ENCODE measurements at regions of chr6 and their contacts with region 1.

Region 1: DNA sequence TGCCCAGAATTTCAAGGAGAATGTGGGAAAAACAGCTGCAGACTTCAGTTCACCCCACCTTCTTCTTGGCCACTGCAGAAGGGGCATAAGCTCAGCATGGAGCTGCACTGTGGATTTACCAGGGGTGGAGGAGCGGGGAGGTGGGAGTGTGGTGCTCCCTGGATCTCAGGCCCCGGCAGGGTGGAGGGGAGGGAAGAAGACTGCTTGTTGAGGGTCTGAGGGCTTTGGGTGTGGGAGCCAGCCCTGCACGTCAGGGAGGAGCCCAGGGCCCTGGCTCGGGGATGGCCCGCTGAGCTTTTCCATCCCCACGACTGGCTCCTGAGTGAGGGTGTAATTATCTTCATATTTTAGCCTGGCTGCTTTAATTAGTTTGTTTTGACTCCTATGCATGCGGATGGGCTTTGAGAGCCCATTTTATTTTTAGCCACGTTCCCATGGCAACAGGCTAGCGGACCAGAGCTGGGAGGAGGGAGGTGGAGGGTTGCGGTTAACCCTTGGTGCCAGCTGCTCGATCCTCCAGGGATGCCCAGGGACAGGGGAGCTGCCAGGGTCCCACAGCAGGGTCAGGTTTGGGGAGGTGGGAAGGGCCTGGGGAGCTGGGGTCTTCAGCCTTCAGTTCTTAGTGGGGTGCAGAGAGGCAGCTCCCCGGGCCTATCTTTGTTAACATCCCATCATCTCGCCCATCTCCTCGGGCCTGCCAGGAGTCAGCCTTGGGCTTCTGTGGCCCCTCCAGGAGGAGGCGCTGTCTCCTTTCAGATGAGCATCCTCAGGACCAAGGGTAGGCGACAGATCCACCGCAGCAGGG is 68.2 kb downstream of the RAB44 start:
- DNase-seq: peak; percentile 91
- ATAC-seq: peak; percentile 93
- H3K4me3 Mint-ChIP-seq: no peak overlapping the region
- H3K27ac Mint-ChIP-seq: no peak overlapping the region
- H3K4me1 Mint-ChIP-seq: peaks cover 17% of the 10 kb centered on the region
- H3K27me3 Mint-ChIP-seq: no peaks in the 10 kb centered on the region
- CTCF ChIP-seq: peak; percentile 91

Region 2: DNA sequence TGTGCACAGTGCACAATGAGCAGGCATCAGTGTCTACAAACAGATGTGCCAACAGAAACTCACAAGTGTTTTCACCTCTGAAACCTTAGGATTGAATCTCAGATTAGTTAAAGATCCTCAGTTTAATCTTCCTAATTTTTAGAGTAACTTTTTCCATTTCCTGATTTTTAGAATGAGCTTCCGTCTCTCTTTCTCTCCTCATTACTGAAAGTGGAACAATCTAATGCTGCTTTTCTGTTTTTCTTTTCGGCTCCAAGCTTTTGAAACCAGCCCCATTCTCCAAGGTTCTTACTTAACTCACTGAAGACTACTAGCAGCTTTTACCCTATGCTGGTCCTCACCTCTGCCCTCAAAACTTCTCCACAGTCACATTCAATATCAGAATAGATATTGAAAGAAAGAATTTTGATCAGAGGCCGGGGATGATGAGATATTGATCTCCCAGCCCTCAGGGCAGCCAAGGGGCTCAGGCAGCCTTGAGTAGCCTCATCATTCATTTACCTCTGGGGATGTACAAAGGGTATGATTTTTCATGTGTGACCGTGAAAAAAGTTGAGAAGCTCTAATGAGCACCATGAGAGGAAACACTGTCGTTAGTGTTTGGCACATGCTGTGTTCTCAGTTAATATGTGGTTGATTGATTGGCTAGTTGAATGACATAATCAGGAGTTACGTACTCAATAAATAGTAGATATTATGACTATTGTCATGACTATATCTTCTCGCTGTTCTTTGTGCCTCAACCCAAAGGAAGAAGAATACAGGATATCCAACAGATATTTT is 206.6 kb before region 1 on chr6:
- CTCF ChIA-PET with region 1: no interaction called
- POLR2A ChIA-PET with region 1: no interaction called
- DNase-seq: no peak
- ATAC-seq: no peak
- H3K4me3 Mint-ChIP-seq: no peak overlapping the region
- H3K27ac Mint-ChIP-seq: no peak overlapping the region
- H3K4me1 Mint-ChIP-seq: no peaks in the 10 kb centered on the region
- H3K27me3 Mint-ChIP-seq: no peaks in the 10 kb centered on the region
- CTCF ChIP-seq: no peak

Region 3: DNA sequence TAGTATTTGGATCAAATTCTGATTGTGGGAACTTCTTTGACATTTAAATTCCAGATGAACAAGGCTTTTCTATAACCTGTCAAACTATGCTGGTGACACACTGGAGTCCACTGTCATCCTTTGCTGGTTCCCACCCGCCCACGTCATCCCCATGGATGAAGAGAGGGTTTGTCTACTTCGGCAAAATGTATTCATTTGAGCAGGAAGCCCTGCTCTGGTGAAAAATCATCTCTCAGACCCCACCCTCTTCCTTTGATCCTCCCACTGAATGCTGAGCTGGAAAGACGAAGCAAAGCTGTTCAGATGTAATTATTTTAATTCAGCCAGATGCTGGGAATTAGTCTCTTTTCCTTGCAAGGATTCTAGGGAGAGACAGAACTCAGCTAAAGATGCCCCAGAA is 23.0 kb after region 1 on chr6:
- CTCF ChIA-PET with region 1: interaction called, 454 read pairs
- POLR2A ChIA-PET with region 1: no interaction called
- DNase-seq: no peak
- ATAC-seq: no peak
- H3K4me3 Mint-ChIP-seq: no peak overlapping the region
- H3K27ac Mint-ChIP-seq: 0 out of 2 replicates have a peak overlapping the region, but pooled peaks have one; percentile 65
- H3K4me1 Mint-ChIP-seq: peaks cover 40% of the 10 kb centered on the region
- H3K27me3 Mint-ChIP-seq: no peaks in the 10 kb centered on the region
- CTCF ChIP-seq: no peak

Region 4: GRCh38 chr6:36809941-36810803 is 44.4 kb after region 1 on chr6:
- CTCF ChIA-PET with region 1: interaction called, 20 read pairs
- POLR2A ChIA-PET with region 1: interaction called, 3 read pairs
- DNase-seq: peak; percentile 55
- ATAC-seq: peak; percentile 72
- H3K4me3 Mint-ChIP-seq: no peak overlapping the region
- H3K27ac Mint-ChIP-seq: no peak overlapping the region
- H3K4me1 Mint-ChIP-seq: peaks cover 22% of the 10 kb centered on the region
- H3K27me3 Mint-ChIP-seq: peaks cover 5% of the 10 kb centered on the region; the same call in 1 of the 2 replicates
- CTCF ChIP-seq: no peak

Region 5: GRCh38 chr6:36863670-36864540 is 98.1 kb after region 1 on chr6:
- CTCF ChIA-PET with region 1: interaction called, 12 read pairs
- POLR2A ChIA-PET with region 1: no interaction called
- DNase-seq: no peak
- ATAC-seq: no peak
- H3K4me3 Mint-ChIP-seq: no peak overlapping the region
- H3K27ac Mint-ChIP-seq: peak overlapping the region; percentile 39; the same call in 1 of the 2 replicates
- H3K4me1 Mint-ChIP-seq: peaks cover 44% of the 10 kb centered on the region
- H3K27me3 Mint-ChIP-seq: no peaks in the 10 kb centered on the region
- CTCF ChIP-seq: no peak

Region 6: GRCh38 chr6:36885461-36886401 is 119.9 kb after region 1 on chr6 and contains the start of gene C6orf89:
- CTCF ChIA-PET with region 1: interaction called, 33 read pairs
- POLR2A ChIA-PET with region 1: no interaction called
- DNase-seq: peak; percentile 95
- ATAC-seq: peak; percentile 99
- H3K4me3 Mint-ChIP-seq: peak within 1 kb of the TSS; percentile 91
- H3K27ac Mint-ChIP-seq: peak within 1 kb of the TSS; percentile 96
- H3K4me1 Mint-ChIP-seq: peaks cover 17% of the 10 kb centered on the region
- H3K27me3 Mint-ChIP-seq: no peaks in the 10 kb centered on the region
- CTCF ChIP-seq: peak; percentile 64
- total RNA-seq, gene C6orf89: 13.2 to 15.6 TPM (median 15.0 TPM) in 3 replicates

Region 7: GRCh38 chr6:37713529-37714119 is 947.8 kb after region 1 on chr6:
- CTCF ChIA-PET with region 1: no interaction called
- POLR2A ChIA-PET with region 1: no interaction called
- DNase-seq: no peak
- ATAC-seq: no peak; the same call in 1 of the 2 replicates
- H3K4me3 Mint-ChIP-seq: no peak overlapping the region
- H3K27ac Mint-ChIP-seq: no peak overlapping the region
- H3K4me1 Mint-ChIP-seq: peaks cover 7% of the 10 kb centered on the region
- H3K27me3 Mint-ChIP-seq: peaks cover 16% of the 10 kb centered on the region
- CTCF ChIP-seq: no peak